ENCODE measurements at regions of chr13 and their contacts with region 1.

Region 1: GRCh38 chr13:40682449-40683240 is 16.2 kb upstream of the FOXO1 start:
- DNase-seq: no peak
- H3K4me3 ChIP-seq: no peak overlapping the region
- H3K27ac ChIP-seq: no peak overlapping the region
- H3K4me1 ChIP-seq: peaks cover 0 to 13% (median 0%) of the 10 kb centered on the region in 4 donors
- H3K27me3 ChIP-seq: no peaks in the 10 kb centered on the region
- CTCF ChIP-seq: peak; percentile 61 to 64

Region 2: GRCh38 chr13:39942552-39943273 is 739.9 kb before region 1 on chr13:
- intact Hi-C with region 1: loop called (anchors 10 kb)
- DNase-seq: peak; percentile 68 to 77
- H3K4me3 ChIP-seq: no peak overlapping the region
- H3K27ac ChIP-seq: no peak overlapping the region
- H3K4me1 ChIP-seq: peaks cover 0 to 3% (median 0%) of the 10 kb centered on the region in 4 donors
- H3K27me3 ChIP-seq: no peaks in the 10 kb centered on the region
- CTCF ChIP-seq: peak; percentile 86 to 89

Region 3: GRCh38 chr13:40230833-40231266 is 451.8 kb before region 1 on chr13:
- intact Hi-C with region 1: no loop called
- DNase-seq: no peak
- H3K4me3 ChIP-seq: no peak overlapping the region
- H3K27ac ChIP-seq: peak overlapping the region; percentile 9 to 36
- H3K4me1 ChIP-seq: peaks cover 0 to 29% (median 8%) of the 10 kb centered on the region in 4 donors
- H3K27me3 ChIP-seq: no peaks in the 10 kb centered on the region
- CTCF ChIP-seq: no peak

Region 4: DNA sequence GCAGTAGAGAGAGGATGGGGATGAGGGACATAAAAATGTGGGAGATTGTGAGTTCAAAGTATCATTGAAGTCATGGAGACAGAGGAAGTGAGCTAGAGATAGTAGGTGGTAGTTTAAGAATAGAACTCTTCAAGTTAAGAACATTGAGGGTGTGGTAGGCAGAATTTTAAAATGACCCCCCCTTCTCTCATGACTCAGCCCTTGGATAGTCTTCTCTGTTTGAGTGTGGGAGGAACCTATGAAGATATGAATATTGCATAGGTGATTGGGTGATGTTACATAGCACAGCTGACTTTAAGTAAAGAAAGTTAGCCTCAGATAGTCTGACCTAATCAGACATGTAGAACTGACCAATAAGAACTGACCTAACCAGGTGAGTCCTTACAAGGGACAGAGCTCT is 434.8 kb before region 1 on chr13:
- intact Hi-C with region 1: no loop called
- DNase-seq: no peak
- H3K4me3 ChIP-seq: no peak overlapping the region
- H3K27ac ChIP-seq: no peak overlapping the region
- H3K4me1 ChIP-seq: peaks cover 0 to 16% (median 0%) of the 10 kb centered on the region in 4 donors
- H3K27me3 ChIP-seq: no peaks in the 10 kb centered on the region
- CTCF ChIP-seq: no peak

Region 5: DNA sequence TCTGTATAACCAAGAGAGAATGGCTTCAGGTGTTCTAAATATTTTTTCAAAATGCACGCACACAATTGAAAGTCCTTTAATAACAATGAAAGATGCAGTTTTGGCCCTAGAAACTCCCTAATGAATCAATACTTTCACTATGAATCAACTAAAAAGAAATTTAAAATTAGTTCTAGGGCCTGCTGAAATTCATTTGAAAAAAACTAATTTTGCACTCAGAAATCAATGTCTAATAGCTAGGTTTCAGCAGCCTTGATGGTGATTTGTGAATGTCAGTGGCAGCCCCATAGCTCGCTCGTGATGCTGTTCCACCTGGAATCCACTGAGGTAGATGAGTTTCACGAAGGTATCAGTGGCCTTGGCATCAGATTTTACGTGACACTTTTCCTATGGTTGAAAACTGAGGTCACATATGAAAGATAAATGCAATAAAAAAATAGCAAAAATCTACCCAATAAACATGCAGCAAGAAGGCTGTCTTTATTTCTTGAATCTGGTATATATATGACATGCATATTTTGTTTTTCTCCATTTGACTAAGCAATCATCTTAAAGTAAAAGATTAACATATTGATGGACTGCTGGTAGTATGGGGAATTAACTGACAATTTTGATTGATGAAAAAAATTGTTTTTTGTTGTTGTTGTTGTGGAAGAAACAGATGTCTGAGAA is 1730.3 kb after region 1 on chr13:
- intact Hi-C with region 1: no loop called
- DNase-seq: no peak
- H3K4me3 ChIP-seq: no peak overlapping the region
- H3K27ac ChIP-seq: no peak overlapping the region
- H3K4me1 ChIP-seq: no peaks in the 10 kb centered on the region
- H3K27me3 ChIP-seq: no peaks in the 10 kb centered on the region
- CTCF ChIP-seq: no peak

Measured in tibial artery (tissue), 4 donors.